Dendritic cell treated with granulocyte-macrophage colony-stimulating factor and Interleukin-4, amounts not matched to agents 40 ng/mL and 50 ng/mL, for 4 days (primary cell): ENCODE measurements at regions of chr5 and their contacts with region 1.

Region 1: DNA sequence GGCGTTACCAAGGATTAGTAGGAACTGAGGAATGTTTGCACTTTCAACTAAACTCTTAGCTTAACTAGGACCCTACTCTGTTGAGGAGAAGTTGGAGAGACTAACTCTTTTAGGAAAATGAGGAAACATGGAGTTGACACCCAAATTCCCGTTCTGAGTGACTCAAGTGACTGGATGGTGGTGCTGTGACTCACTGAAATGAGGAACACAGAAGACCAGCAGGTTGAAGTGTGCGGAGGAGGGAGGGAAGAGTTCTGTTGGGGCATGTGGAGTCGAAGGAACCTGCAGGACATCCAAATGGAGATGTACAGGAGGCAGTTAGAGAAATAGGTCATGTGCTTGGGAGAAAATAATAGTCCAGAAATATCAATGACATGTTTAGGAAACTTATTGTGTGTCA is 8.2 kb downstream of the HEXB start:
- H3K4me3 Mint-ChIP-seq: no peak overlapping the region
- H3K27ac Mint-ChIP-seq: peak overlapping the region; percentile 54
- H3K4me1 Mint-ChIP-seq: peaks cover 18% of the 10 kb centered on the region
- H3K27me3 Mint-ChIP-seq: no peaks in the 10 kb centered on the region

Region 2: GRCh38 chr5:74342948-74343682 is 350.1 kb before region 1 on chr5:
- intact Hi-C with region 1: no loop called
- H3K4me3 Mint-ChIP-seq: no peak overlapping the region
- H3K27ac Mint-ChIP-seq: no peak overlapping the region
- H3K4me1 Mint-ChIP-seq: peaks cover 5% of the 10 kb centered on the region
- H3K27me3 Mint-ChIP-seq: peaks cover 26% of the 10 kb centered on the region

Region 3: DNA sequence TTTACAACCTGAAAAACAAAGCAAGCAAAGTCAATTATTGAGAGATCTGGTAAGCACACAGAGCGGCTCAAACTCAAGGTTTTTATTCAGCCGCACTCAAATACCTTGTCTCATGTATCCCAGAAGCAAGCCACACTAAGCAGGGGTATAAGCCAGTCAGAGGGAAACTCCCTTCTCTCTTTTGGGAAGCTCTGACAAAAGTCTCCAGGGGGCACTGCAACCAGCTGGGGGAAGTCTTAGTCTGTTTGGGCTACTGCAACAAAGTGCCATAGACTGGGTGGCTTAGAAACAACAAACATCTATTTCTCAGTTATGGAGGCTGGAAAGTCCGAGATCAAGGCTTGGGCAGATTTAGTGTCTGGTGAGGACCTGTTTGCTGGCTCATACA is 298.7 kb before region 1 on chr5:
- intact Hi-C with region 1: no loop called
- H3K4me3 Mint-ChIP-seq: no peak overlapping the region
- H3K27ac Mint-ChIP-seq: no peak overlapping the region
- H3K4me1 Mint-ChIP-seq: peaks cover 36% of the 10 kb centered on the region
- H3K27me3 Mint-ChIP-seq: no peaks in the 10 kb centered on the region

Region 4: DNA sequence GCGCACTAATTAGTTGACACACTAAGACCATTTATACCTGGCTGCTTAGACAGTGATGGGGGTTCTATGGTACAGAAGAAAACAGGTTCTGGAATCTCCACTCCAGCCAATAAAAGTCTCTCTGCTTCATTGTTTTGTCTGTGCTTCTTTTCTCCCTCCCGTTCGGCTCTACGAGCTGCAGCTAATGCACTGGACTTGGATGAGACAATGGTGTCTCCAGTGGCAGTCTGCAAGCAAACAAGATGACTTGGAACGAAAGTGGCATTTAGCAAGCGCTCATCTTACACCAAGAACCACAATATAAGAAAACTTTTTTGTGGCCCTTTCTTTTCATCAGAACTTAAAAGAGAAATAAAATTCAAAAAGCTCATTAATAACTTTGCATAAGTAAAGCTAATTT is 43.6 kb after region 1 on chr5:
- intact Hi-C with region 1: loop called (anchors 10 kb)
- H3K4me3 Mint-ChIP-seq: no peak overlapping the region
- H3K27ac Mint-ChIP-seq: no peak overlapping the region
- H3K4me1 Mint-ChIP-seq: no peaks in the 10 kb centered on the region
- H3K27me3 Mint-ChIP-seq: no peaks in the 10 kb centered on the region